Dendritic cell treated with granulocyte-macrophage colony-stimulating factor and Interleukin-4, amounts not matched to agents 40 ng/mL and 50 ng/mL, for 4 days (primary cell): ENCODE measurements at regions of chr4 and their contacts with region 1.

Region 1: DNA sequence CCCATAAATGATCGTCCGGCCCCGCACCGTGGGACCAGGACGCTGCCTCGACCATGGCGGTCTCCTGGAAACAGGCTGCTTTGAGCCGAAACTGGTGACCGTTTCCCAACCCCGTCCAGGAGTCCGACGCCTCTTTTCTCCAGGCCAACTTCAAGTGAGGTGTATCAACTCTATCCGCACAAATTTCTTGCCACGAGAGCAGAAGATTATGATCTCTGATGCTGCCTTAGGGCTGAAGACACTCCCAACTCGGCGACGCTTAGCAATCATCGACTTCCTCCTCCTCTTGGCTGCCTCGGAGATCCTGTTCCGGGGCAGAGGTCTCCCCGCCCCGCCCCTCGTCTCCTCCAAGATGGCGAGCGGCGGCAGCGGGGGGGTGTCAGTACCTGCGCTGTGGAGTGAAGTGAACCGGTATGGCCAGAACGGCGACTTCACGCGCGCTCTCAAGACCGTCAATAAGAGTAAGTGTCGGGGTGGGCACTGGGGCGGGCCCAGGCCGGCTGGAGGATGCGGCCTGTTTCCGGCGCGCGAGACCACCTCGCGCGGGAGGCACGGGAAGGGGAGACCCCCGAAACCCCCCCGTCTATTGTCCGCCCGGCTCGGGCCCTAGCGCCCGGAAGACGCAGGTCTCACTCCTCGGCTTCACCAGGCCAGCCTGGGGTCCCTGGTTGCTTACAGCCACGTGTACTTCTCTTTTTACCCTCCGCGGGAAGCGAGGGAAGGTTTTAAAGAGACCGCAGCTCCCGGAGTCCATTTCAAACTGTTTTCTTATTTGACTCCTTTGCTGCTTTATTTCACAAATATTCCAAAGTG is at the start of gene SRP72:
- H3K4me3 Mint-ChIP-seq: peak within 1 kb of the TSS; percentile 94
- H3K27ac Mint-ChIP-seq: peak within 1 kb of the TSS; percentile 87
- H3K4me1 Mint-ChIP-seq: peaks cover 44% of the 10 kb centered on the region
- H3K27me3 Mint-ChIP-seq: no peaks in the 10 kb centered on the region

Region 2: GRCh38 chr4:56387023-56388001 is 80.2 kb before region 1 on chr4 and contains the start of gene AASDH:
- intact Hi-C with region 1: loop called (anchors 2 kb)
- H3K4me3 Mint-ChIP-seq: peak within 1 kb of the TSS; percentile 87
- H3K27ac Mint-ChIP-seq: peak within 1 kb of the TSS; percentile 99
- H3K4me1 Mint-ChIP-seq: peaks cover 14% of the 10 kb centered on the region
- H3K27me3 Mint-ChIP-seq: no peaks in the 10 kb centered on the region

Region 3: DNA sequence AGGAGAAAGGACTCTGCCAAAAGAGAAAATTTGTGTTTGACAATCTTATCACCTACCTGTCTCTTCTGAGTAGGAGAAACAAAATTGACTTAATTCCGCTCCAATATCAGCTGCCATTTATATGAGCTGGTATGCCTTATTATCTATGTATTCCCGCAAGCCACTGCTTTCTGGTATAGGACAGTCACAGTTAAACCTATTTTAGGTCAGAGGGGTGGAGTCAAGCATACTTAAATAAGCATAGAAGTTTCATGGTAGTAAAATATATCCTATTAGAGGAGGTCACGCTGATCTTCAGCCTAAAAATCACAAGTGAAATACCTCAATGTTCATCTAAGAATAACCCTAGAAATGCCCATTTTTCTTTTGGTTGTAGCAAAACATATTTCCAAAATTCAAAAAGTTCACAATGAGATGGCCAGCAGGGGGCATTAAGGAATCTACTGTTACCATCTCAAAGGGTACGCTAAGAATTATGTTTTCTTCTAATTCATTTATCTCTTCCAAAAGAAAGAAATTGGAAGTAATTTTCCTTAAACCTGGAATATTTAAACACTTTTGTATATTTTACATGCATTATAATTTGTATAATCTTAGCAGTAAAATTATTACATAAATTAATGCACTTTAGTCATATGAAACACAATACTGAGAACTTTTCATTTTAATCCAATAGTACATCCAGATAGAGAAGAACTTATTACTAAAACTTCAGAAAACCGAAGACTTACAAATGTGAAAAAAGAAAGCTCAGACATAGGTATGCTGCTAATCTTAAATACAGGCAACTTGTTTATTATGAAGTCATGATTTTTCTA is 42.6 kb before region 1 on chr4:
- intact Hi-C with region 1: loop called (anchors 5 kb)
- H3K4me3 Mint-ChIP-seq: no peak overlapping the region
- H3K27ac Mint-ChIP-seq: no peak overlapping the region
- H3K4me1 Mint-ChIP-seq: no peaks in the 10 kb centered on the region
- H3K27me3 Mint-ChIP-seq: no peaks in the 10 kb centered on the region

Region 4: GRCh38 chr4:56435306-56435926 is 32.1 kb before region 1 on chr4 and contains the start of gene PPAT:
- intact Hi-C with region 1: loop called (anchors 1 kb)
- H3K4me3 Mint-ChIP-seq: peak within 1 kb of the TSS; percentile 78
- H3K27ac Mint-ChIP-seq: peak within 1 kb of the TSS; percentile 89
- H3K4me1 Mint-ChIP-seq: peaks cover 35% of the 10 kb centered on the region
- H3K27me3 Mint-ChIP-seq: no peaks in the 10 kb centered on the region